ENCODE measurements at regions of chr1 and their contacts with region 1.

Region 1: GRCh38 chr1:31155216-31155841 is 84.4 kb downstream of the NKAIN1 start:
- DNase-seq: peak; percentile 52

Region 2: DNA sequence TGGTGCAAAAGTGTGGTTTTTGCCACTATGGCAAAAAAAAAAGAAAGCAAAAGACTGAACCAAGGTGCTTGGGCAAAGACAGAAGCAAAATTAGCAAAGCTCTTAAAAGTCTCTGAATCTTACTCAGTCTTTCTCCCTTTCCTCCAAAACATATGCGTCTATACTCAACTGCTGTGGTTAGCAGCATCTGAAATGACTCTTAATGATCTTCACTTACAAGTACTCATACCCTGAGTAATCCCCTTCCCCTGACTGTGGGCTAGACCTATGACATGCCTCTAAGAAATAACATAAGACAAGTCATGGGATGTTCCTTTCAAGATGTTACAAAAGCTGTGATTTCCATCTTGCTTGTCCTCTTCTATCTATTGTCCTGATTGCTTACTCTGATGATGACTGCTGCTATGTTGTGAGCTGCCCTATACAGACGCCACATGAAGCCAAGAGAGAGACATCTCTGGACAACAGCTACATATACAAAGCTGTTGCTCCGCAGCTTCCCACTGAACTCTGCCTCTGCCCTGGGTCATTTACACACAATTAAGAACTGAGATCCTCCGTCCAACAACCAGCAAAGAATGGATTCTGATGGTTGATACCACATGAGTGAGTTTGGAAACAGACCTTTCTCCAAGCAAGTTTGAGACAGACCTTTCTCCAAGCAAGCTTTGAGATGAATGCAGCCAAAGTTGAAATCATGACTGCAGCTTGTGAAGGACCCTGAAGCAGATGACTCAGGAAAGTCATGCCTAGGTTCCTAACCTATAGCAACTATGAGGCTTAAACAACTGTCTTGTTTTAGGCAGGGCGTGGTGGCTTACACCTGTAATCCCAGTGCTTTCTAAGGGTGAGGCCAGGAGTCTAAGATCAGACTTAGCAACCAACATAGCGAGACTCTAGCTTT is 145.0 kb before region 1 on chr1:
- in situ Hi-C with region 1: loop called (anchors 25 kb)
- DNase-seq: peak; percentile 30

Region 3: GRCh38 chr1:31368611-31369107 is 213.3 kb after region 1 on chr1:
- in situ Hi-C with region 1: no loop called
- DNase-seq: peak; percentile 13

Measured in G401 (cell line).